ENCODE measurements at regions of chr13 and their contacts with region 1.

Region 1: GRCh38 chr13:51397262-51397941 is 55.4 kb downstream of the INTS6 start:
- DNase-seq: no peak
- H3K4me3 Mint-ChIP-seq: no peak overlapping the region
- H3K27ac Mint-ChIP-seq: no peak overlapping the region
- H3K4me1 Mint-ChIP-seq: peaks cover 39% of the 10 kb centered on the region
- H3K27me3 Mint-ChIP-seq: no peaks in the 10 kb centered on the region

Region 2: GRCh38 chr13:51380269-51380668 is 17.1 kb before region 1 on chr13:
- CTCF ChIA-PET with region 1: no interaction called
- intact Hi-C with region 1: no loop called
- DNase-seq: no peak
- H3K4me3 Mint-ChIP-seq: no peak overlapping the region
- H3K27ac Mint-ChIP-seq: no peak overlapping the region
- H3K4me1 Mint-ChIP-seq: peaks cover 2% of the 10 kb centered on the region
- H3K27me3 Mint-ChIP-seq: no peaks in the 10 kb centered on the region

Region 3: GRCh38 chr13:51416107-51416506 is 18.7 kb after region 1 on chr13:
- CTCF ChIA-PET with region 1: interaction called, 3 read pairs
- intact Hi-C with region 1: loop called (anchors 2 kb)
- DNase-seq: no peak
- H3K4me3 Mint-ChIP-seq: no peak overlapping the region
- H3K27ac Mint-ChIP-seq: peak overlapping the region; percentile 62
- H3K4me1 Mint-ChIP-seq: peaks cover 63% of the 10 kb centered on the region
- H3K27me3 Mint-ChIP-seq: no peaks in the 10 kb centered on the region